BJ (cell line): ENCODE measurements at regions of chr16 and their contacts with region 1.

Region 1: DNA sequence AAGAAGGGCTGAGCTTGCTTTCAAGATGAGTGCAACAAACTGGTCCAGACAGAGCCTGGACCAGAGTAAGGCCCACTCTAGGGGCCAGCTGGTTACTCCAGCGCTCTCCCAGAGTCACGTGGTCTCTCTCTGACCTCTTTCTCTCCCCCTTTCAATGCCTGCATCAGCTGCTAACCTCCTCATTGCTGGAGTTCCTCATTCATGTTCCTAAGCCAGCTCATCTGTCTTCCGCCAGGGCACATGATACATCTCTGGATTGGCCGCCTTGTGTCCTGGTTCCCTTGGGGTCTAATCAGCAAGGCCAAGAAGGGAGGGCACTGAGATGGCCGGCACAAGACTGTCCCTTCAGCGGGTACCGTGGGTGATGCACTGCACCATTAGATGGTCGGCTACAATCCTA is 26.9 kb upstream of the ZFP90 start:
- DNase-seq: no peak
- H3K4me3 ChIP-seq: no peak overlapping the region
- H3K27me3 ChIP-seq: no peaks in the 10 kb centered on the region; the same call in 1 of the 2 replicates
- CTCF ChIP-seq: no peak

Region 2: DNA sequence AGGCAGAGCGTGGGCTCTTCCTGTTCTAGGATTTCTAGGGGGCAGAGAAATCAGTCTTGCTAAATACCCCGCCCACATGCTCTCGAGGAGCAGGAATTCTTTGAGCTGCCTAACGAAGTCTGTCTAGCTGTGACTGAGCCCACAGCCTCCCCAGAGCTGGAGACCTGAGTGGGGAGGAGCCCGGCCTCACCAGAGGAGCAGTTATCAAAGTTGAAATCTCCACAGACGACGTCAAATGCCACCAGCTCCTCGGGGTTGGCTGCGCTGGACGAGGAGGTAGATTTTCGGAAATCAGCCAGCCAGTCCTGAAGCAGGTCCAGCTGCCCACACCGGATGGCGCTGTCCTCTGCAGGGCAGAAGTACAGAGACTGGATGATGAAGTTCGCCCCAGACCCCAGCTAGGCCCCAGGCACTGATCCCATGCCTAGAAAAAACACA is 147.6 kb before region 1 on chr16:
- CTCF ChIA-PET with region 1: interaction called, 30 read pairs
- POLR2A ChIA-PET with region 1: no interaction called
- DNase-seq: no peak
- H3K4me3 ChIP-seq: no peak overlapping the region
- H3K27me3 ChIP-seq: peaks cover 2% of the 10 kb centered on the region; the same call in 1 of the 2 replicates
- CTCF ChIP-seq: peak; percentile 33; the same call in 1 of the 2 replicates

Region 3: DNA sequence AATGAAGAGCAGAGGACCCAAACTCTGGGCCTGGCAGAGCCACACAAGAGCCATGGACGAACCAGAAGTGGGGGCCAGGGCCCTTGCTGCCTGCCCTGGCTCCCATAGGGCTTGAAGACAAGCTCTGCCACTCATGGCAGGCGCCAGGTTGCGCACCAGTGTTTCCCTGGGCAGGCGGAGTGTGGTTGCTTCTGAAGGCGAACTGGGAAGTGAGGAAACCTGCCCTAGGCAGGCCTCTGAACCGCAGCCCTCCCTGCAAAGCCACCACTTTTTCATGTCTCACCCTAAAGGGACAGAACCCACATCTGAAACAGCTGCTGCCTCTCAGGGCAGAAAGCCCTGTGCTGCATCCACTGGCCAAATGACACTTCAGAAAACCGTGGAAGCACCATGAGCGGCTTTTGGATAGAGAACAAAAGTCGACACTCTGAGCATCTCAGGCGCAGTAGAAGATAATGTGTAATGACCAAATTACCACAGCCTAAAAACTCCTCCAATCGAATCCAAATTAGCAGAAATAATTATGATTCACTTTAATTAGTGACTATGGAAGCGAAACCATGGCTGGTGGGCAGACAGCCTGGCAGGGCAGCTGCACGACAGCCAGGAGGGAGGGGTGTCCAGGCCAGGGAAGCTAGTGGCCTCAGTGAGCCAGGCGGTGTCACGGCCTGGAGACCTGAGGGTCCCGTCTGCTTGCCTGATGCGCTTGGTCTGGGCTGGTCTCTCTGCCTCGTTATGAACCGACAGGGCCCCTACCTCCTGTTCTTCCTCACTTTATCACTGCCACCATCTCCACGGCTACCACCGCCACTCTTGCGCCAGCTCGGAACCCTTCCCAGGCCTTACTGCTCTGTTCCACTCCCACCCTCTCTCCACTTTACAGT is 142.2 kb before region 1 on chr16:
- CTCF ChIA-PET with region 1: interaction called, 30 read pairs
- POLR2A ChIA-PET with region 1: no interaction called
- DNase-seq: no peak
- H3K4me3 ChIP-seq: no peak overlapping the region
- H3K27me3 ChIP-seq: peaks cover 2% of the 10 kb centered on the region
- CTCF ChIP-seq: no peak

Region 4: DNA sequence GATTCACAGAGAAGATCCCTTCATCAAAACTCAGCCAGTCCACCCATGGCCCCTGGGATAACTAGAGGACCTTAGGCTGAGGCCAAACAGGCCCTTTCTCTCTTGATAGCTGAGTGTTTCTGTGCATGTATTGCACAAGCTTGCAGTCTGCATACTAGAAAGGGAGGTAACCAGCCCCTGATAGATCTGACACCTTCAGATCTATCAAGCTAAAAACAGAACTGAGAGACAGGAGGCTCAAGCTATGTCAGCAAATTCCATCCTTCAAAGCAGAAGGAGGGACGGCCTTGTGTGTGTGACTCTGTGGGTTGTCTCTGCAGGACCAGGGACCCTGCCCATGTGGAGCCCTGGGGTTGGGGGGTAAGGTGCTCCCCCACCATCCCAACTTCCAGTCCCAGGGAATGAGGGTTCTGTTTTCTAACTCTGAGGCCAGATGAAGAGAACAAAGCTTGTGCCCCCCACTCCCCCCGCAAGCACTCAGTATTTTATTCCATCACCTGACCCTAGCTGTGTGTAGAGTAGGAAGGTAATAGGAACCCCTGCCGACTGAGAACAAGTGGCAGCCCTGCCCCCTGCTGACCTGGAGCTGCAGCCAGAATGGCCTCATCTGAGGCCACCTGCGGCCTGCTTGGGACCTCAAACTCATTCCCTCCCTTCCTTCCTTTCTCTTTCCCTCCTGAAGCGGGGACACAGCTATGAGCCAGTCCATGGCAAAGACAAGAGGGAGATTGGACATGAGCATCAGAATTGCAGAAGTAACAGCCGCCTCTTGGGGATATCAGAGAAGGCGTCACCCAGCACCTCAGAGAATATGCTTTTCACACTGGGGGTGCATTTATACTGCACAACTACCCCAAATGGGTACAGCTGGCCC is 127.7 kb before region 1 on chr16:
- CTCF ChIA-PET with region 1: interaction called, 12 read pairs
- POLR2A ChIA-PET with region 1: no interaction called
- DNase-seq: no peak
- H3K4me3 ChIP-seq: no peak overlapping the region
- H3K27me3 ChIP-seq: peaks cover 12% of the 10 kb centered on the region
- CTCF ChIP-seq: no peak

Region 5: DNA sequence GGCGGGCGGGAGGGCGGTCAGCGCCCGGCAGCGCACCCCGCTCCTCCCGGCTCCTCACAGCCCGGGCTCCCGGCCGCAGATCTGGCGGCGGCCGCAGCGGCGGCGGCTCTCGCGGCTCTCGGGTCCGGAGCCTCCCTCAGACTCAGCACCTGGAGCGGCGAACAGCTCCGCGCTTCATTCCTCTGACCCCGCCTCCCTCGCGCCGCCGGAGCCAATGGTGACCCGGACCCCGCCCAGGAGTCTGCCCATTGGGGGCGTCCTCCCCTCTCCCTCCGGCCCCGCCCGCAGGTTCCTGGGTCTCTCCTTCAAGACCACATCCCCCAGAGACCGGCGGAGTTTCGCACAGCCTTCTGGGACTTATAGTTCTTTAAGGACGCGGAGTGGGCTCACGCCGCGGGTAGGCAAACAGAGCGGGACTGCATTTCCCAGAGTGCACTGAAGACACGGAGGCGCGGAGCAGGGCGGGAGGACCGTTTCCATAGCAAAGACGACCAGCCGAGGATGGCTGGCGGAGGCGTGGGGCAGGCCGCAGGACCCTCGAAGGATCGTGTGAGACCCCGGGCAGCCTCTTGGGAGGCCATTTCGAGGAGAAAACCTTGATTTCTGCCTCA is 63.7 kb before region 1 on chr16 and contains the start of gene SMPD3:
- CTCF ChIA-PET with region 1: interaction called, 65 read pairs
- POLR2A ChIA-PET with region 1: no interaction called
- DNase-seq: peak; percentile 90
- H3K4me3 ChIP-seq: peak within 1 kb of the TSS; percentile 45
- H3K27me3 ChIP-seq: peaks cover 9% of the 10 kb centered on the region
- CTCF ChIP-seq: no peak
- polyA plus RNA-seq, gene SMPD3: 0.07 and 0.27 TPM in 2 replicates

Region 6: DNA sequence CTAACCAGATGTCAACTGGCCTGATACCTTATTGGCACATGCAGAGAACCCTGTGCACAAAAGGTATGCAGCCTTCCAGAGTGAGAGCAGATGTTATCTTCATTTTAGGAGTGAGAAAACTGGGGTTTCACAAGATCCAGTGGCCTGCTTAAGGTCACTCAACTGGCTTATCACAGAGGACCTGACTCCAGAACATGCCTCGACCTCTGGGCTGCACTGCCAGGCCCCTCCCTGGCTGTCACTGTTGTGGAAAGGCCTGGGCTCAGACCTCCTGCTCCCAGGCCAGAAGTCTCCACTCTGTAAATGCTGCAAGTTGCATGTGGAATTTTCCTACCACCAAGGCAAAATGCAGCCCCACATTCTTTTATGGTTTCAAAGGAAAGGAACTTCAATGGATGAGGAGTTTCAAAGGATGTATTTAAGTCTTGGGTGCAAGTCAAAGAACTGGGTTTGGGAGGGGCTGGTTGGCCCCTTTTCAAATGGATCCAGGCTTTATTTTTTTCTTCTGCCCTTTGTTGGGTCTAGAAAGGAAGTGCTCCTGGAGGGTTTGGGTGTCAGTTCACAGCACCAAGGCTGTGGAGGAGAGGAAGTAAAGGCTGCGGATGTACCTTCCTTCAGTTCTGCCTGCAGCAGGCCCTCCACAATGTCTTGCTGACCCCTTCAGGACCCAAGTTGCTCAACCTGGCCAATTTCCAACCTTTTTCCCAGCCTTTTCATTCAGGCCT is 33.5 kb before region 1 on chr16:
- CTCF ChIA-PET with region 1: interaction called, 18 read pairs
- POLR2A ChIA-PET with region 1: no interaction called
- DNase-seq: no peak
- H3K4me3 ChIP-seq: no peak overlapping the region
- H3K27me3 ChIP-seq: no peaks in the 10 kb centered on the region
- CTCF ChIP-seq: no peak

Region 7: DNA sequence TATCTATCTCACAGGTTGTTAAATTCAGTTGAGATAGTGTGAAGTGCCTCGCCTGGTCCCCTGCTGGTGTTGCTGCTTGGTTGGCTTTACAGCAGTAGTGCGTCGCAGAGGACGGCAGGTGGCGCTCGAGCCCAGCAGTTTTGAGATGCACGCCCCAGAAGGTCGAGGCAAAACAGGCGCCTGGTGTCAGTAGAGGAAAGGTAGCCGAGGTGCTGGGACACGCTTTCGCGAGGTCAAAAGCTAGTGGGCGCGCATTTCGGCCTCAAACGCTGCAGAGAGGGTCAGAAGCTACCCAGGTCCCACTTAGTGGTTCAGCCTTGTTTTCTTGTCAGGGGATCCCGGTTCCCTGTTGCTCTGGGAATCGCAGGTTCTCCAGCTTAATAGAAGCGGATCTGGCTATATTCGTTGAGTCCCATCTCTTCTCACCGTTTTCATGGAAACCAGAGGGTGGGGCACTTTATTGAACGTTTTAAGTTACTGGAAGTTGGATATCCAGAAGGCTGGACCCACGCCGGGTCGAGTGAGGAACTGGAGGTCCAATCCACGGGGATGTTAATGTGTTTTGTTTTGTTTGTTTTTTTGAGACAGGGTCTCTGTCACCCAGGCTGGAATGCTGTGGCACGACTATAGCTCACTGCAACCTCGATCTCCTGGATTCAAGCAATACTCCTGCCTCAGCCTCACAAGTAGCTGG is 16.6 kb after region 1 on chr16:
- CTCF ChIA-PET with region 1: interaction called, 22 read pairs
- POLR2A ChIA-PET with region 1: no interaction called
- DNase-seq: no peak
- H3K4me3 ChIP-seq: peak overlapping the region; percentile 19; the same call in 1 of the 2 replicates
- H3K27me3 ChIP-seq: no peaks in the 10 kb centered on the region
- CTCF ChIP-seq: peak; percentile 97